Caco-2 (cell line): ENCODE measurements at regions of chrX and their contacts with region 1.

Region 1: GRCh38 chrX:42246814-42247213 is 323.5 kb upstream of the CASK start:
- DNase-seq: peak; percentile 84 to 88
- H3K4me3 ChIP-seq: peak overlapping the region; percentile 14
- H3K4me3 Mint-ChIP-seq: peak overlapping the region; percentile 67
- H3K27ac Mint-ChIP-seq: peak overlapping the region; percentile 64
- H3K4me1 ChIP-seq: peaks cover 30% of the 10 kb centered on the region
- H3K4me1 Mint-ChIP-seq: peaks cover 27% of the 10 kb centered on the region
- H3K27me3 ChIP-seq: no peaks in the 10 kb centered on the region
- H3K27me3 Mint-ChIP-seq: no peaks in the 10 kb centered on the region
- CTCF ChIP-seq: no peak

Region 2: DNA sequence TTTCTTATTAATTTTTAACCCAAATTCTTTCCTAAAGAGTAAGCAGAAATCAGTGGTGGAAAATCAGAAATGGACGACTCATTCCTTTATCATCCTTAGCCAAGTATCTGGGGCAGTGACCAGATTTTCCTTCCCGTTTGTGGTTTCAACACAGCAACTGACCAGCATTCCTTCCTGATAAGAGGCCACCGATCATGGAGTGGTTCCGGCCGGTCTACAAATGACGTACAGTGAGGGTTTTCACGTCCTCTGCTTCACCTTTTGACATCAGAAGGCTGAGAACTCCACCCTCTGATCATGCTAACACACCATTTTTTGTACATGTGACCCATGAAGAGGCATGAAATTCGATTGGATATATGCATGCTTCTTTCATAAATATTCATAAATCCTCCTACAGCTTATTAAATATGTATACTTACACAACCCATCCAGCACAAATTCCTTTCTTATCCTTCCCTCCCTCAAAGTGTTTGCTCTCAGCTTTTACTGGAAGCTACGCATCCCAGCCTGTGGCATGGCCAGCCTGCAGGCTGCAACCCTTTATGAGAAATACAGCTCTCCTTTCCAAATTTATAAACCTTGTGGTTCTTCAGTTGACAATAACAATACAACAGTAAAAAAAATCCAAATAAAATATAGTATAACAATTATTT is 150.4 kb before region 1 on chrX:
- CTCF ChIA-PET with region 1: no interaction called
- POLR2A ChIA-PET with region 1: no interaction called
- intact Hi-C with region 1: loop called (anchors 10 kb)
- DNase-seq: peak; percentile 82 to 92
- H3K4me3 ChIP-seq: no peak overlapping the region
- H3K4me3 Mint-ChIP-seq: peak overlapping the region; percentile 59
- H3K27ac Mint-ChIP-seq: peak overlapping the region; percentile 92
- H3K4me1 ChIP-seq: peaks cover 48% of the 10 kb centered on the region
- H3K4me1 Mint-ChIP-seq: peaks cover 31% of the 10 kb centered on the region
- H3K27me3 ChIP-seq: no peaks in the 10 kb centered on the region
- H3K27me3 Mint-ChIP-seq: no peaks in the 10 kb centered on the region
- CTCF ChIP-seq: no peak

Region 3: GRCh38 chrX:42229533-42229932 is 17.3 kb before region 1 on chrX:
- CTCF ChIA-PET with region 1: no interaction called
- POLR2A ChIA-PET with region 1: no interaction called
- intact Hi-C with region 1: no loop called
- DNase-seq: no peak
- H3K4me3 ChIP-seq: no peak overlapping the region
- H3K4me3 Mint-ChIP-seq: no peak overlapping the region
- H3K27ac Mint-ChIP-seq: no peak overlapping the region
- H3K4me1 ChIP-seq: no peaks in the 10 kb centered on the region
- H3K4me1 Mint-ChIP-seq: no peaks in the 10 kb centered on the region
- H3K27me3 ChIP-seq: no peaks in the 10 kb centered on the region
- H3K27me3 Mint-ChIP-seq: no peaks in the 10 kb centered on the region
- CTCF ChIP-seq: no peak

Region 4: GRCh38 chrX:42276982-42277690 is 30.3 kb after region 1 on chrX:
- CTCF ChIA-PET with region 1: no interaction called
- POLR2A ChIA-PET with region 1: no interaction called
- intact Hi-C with region 1: loop called (anchors 1 kb)
- DNase-seq: peak; percentile 30 to 55
- H3K4me3 ChIP-seq: no peak overlapping the region
- H3K4me3 Mint-ChIP-seq: peak overlapping the region; percentile 9
- H3K27ac Mint-ChIP-seq: no peak overlapping the region
- H3K4me1 ChIP-seq: peaks cover 30% of the 10 kb centered on the region
- H3K4me1 Mint-ChIP-seq: no peaks in the 10 kb centered on the region
- H3K27me3 ChIP-seq: no peaks in the 10 kb centered on the region
- H3K27me3 Mint-ChIP-seq: no peaks in the 10 kb centered on the region
- CTCF ChIP-seq: no peak